Sigmoid colon (tissue), 7 donors: ENCODE measurements at regions of chr1 and their contacts with region 1.

Region 1: GRCh38 chr1:167220537-167221125 is at the start of gene POU2F1:
- DNase-seq: peak; percentile 99
- H3K4me3 ChIP-seq: peak within 1 kb of the TSS; percentile 85 to 96 (median 92)
- H3K27ac ChIP-seq: peak within 1 kb of the TSS; percentile 94 to 99 (median 98)
- H3K4me1 ChIP-seq: peaks cover 0 to 44% (median 30%) of the 10 kb centered on the region in 4 donors
- H3K27me3 ChIP-seq: no peaks in the 10 kb centered on the region
- CTCF ChIP-seq: peak in 3 of 4 experiments; percentile 18 to 71 (median 48)
- EP300 ChIP-seq: no peak
- POLR2A ChIP-seq: peak; percentile 44 to 51
- total RNA-seq, gene POU2F1: 15.0 to 35.5 (median 20.3) TPM

Region 2: DNA sequence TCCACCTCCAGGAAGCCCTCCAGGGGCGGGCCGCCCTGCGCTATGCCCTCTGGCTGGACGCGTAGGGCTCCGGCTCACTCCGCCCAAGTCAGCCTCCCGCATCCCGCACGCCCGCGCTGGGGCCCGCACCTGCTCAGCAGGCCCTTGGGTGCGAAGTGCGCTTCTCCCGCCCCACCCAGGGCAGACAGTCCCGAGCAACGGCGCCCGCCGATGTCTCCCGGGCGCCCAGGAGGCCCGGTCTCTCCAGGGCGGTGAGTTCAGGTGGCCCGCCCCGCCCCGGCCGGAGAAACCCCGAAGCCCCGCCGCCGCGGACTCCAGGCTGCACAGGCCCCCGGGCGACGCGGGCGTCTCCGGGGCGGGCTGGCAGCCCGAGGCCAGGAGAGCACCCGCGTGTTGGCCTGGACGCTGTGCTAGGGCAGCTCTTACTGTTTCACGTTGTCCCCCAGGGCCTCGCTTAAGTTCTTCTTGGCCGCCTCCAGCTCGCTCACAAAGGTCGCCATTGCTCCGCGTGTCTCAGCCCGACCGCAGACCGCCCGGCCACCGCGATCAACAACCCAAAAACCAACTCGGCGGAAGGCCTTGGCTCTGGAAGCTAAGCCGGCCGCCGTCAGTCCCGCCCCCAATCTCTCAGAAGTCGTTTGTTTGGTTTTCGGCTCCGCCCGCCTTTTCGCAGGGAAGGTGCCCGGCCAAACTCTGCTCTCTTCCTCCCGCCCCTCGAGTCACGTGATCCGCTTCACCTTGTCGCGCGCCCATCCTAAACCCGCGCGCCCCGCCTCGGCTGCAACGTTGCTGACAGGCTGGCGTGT is 344.7 kb before region 1 on chr1 and contains the start of gene TADA1:
- intact Hi-C with region 1: loop called (anchors 10 kb)
- DNase-seq: peak; percentile 99
- H3K4me3 ChIP-seq: peak within 1 kb of the TSS; percentile 77 to 91 (median 80)
- H3K27ac ChIP-seq: peak within 1 kb of the TSS; percentile 88 to 97 (median 93)
- H3K4me1 ChIP-seq: peaks cover 0 to 50% (median 36%) of the 10 kb centered on the region in 4 donors
- H3K27me3 ChIP-seq: no peaks in the 10 kb centered on the region
- CTCF ChIP-seq: no peak
- EP300 ChIP-seq: no peak
- POLR2A ChIP-seq: peak in 1 of 2 donors; percentile 40
- total RNA-seq, gene TADA1: 8.3 to 16.4 (median 11.2) TPM

Region 3: DNA sequence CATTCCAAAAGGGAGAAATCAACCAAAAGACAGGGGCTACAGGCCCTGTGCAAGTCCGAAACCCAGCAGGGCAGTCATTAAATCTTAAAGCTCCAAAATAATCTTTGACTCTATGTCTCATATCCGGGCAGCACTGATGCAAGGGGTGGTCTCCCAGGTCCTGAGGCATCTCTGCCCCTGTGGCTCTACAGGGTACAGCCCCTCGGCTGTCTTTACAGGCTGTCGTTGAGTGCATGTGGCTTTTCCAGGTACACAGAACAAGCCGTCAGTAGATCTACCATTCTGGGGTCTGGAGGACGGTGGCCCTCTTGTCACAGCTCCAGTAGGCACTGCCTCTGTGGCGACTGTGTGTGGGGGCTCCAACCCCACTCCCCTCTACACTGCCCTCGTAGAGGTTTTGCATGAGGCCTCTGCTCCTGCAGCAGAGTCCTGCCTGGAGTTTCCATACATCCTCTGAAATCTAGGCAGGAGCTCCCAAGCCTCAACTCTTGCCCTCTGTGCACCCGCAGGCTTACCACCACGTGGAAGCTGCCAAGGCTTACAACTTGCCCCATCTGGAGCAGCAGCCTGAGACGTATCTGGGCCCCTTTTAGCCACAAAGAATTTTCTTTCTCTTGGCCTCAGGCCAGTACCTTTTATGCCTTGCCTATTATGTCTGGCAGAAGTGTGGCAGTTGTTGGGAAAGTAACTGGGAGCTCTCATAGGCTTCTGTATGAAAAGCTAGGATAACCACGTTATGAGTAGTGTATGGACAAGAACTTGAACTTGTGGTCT is 52.6 kb after region 1 on chr1:
- intact Hi-C with region 1: no loop called
- DNase-seq: no peak
- H3K4me3 ChIP-seq: no peak overlapping the region
- H3K27ac ChIP-seq: no peak overlapping the region
- H3K4me1 ChIP-seq: peaks cover 0 to 57% (median 31%) of the 10 kb centered on the region in 4 donors
- H3K27me3 ChIP-seq: no peaks in the 10 kb centered on the region
- CTCF ChIP-seq: no peak
- EP300 ChIP-seq: no peak
- POLR2A ChIP-seq: no peak

Region 4: GRCh38 chr1:167442124-167442848 is 221.7 kb after region 1 on chr1:
- intact Hi-C with region 1: loop called (anchors 5 kb)
- DNase-seq: peak; percentile 87
- H3K4me3 ChIP-seq: no peak overlapping the region
- H3K27ac ChIP-seq: no peak overlapping the region
- H3K4me1 ChIP-seq: peaks cover 0 to 12% (median 9%) of the 10 kb centered on the region in 4 donors
- H3K27me3 ChIP-seq: peaks cover 0 to 20% (median 3%) of the 10 kb centered on the region in 3 donors
- CTCF ChIP-seq: peak; percentile 57 to 82 (median 76)
- EP300 ChIP-seq: no peak
- POLR2A ChIP-seq: no peak

Region 5: DNA sequence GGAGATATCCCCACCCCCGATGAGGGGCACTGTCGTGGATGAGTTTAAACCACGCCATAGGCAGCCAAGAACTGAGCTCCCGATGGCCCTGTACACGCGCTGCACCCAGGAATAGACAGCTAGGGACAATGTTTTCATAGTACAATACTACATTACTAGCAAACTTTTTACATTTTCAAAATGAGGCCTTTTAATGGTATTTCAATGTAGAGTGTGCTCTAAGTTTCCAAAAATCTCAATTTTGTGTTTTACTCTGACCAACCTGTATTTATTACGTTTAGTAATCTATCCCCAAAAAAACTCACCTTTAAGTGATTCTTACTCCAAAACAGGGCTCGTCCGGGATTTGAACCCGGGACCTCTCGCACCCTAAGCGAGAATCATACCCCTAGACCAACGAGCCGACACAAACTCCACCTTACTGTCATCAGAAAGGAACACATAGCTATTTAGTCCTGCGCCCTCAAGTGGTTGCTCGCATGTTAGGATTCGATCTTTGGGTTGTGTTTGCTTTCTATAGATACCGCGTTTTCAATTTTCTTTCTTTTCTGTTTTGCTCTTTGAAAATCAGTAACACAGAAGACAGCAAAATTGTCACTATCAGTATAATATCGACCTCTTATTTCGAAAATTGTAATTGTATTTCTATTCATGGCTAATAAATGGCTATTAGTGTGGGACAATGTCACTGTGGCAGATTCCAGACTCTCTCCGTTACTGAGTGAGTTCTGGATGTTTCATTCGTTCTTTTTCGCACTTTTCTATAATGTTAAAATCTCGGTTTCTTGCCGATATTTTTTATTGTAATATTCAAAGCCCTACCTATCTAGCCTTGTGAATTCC is 494.7 kb after region 1 on chr1:
- intact Hi-C with region 1: loop called (anchors 1 kb)
- DNase-seq: peak; percentile 92
- H3K4me3 ChIP-seq: peak overlapping the region; percentile 57 to 73 (median 67)
- H3K27ac ChIP-seq: peak overlapping the region; percentile 86 to 92 (median 88)
- H3K4me1 ChIP-seq: peaks cover 0 to 20% (median 3%) of the 10 kb centered on the region in 4 donors
- H3K27me3 ChIP-seq: no peaks in the 10 kb centered on the region
- CTCF ChIP-seq: peak; percentile 76 to 91 (median 89)
- EP300 ChIP-seq: no peak
- POLR2A ChIP-seq: no peak